Activated CD4-positive, alpha-beta T cell treated with anti-CD3 and anti-CD28 coated beads, Interleukin-2, amount 10 ng/mL, durations not matched to agents 24 days and 14 days (primary cell): ENCODE measurements at regions of chr1 and their contacts with region 1.

Region 1: GRCh38 chr1:154442006-154442740 is 37.0 kb downstream of the IL6R start:
- DNase-seq: no peak
- H3K4me3 Mint-ChIP-seq: no peak overlapping the region
- H3K27ac Mint-ChIP-seq: no peak overlapping the region
- H3K4me1 Mint-ChIP-seq: peaks cover 53% of the 10 kb centered on the region
- H3K27me3 Mint-ChIP-seq: peaks cover 8% of the 10 kb centered on the region

Region 2: GRCh38 chr1:153842006-153842471 is 600.1 kb before region 1 on chr1:
- intact Hi-C with region 1: no loop called
- DNase-seq: no peak
- H3K4me3 Mint-ChIP-seq: no peak overlapping the region
- H3K27ac Mint-ChIP-seq: no peak overlapping the region
- H3K4me1 Mint-ChIP-seq: peaks cover 16% of the 10 kb centered on the region
- H3K27me3 Mint-ChIP-seq: no peaks in the 10 kb centered on the region

Region 3: DNA sequence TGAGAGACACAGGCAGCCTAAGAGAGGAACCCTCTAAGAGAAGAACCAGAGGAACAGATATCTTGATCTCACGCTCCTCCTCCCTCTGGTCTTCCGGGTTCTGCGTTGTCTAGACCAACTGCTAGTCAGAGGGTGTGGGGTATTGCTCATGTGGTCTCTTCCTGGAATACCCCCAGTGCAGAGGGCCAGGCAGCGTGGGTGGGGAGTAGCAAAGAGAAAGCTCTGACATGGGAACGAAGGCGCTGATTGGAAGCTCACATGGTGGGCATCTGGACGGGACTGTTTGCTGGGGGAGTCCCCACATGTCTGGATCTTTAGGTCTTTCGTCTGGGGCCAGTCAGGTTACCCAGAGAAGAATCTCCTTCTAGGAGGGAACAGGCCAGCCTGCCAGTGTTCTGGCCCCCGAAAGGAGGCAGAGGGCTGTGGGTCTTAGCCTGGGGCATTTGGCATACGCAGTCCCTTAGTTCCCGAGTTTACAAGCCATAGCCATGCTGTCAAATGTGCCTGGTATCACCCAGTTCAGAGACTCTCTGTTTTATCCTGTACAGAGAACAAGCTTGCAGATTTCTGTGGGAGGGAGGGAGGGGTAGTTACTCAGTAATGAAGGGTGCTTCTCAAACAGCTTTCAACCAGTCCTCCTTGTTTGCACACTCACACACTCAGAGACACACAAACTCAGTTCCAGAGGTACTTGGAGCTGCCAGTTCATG is 55.4 kb before region 1 on chr1:
- intact Hi-C with region 1: loop called (anchors 1 kb)
- DNase-seq: peak; percentile 86
- H3K4me3 Mint-ChIP-seq: peak overlapping the region; percentile 78
- H3K27ac Mint-ChIP-seq: peak overlapping the region; percentile 94
- H3K4me1 Mint-ChIP-seq: peaks cover 18% of the 10 kb centered on the region
- H3K27me3 Mint-ChIP-seq: no peaks in the 10 kb centered on the region

Region 4: DNA sequence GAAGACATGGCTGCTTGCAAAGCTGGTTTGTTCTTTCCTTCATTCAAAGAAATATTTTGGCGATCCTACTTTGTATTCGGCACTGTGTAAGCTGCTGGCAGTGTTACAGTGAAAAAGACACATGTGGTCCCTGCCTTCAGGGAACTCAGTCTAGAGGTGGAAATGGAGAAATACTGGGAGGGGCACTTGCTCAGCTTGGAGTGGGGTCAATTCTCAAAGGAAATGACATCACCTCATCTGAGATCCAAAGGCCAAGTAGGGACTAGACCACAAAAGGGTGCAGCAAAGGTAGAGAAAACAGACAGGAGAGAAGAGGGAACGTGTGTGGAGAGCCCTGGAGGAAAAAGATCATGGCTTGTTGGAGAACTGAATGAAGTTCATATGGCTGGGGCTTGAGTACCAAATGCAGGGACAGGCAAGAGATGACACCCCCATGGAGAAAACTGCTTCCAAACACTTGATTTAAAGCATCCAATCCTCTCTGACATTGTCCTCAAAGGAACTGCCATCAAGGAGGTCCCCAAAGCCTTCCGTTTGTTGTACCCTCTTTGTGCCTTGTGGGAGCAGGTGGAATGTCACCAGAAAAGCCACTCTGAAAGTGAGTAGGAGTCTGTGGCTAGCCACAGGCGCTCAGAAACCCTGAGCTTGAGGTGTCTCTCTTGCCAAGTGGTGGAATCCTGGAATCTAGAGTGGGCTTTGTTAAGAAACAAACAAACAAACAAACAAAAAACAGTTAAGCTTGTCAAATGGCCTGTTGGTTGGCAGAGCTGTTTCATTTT is 11.6 kb after region 1 on chr1:
- intact Hi-C with region 1: loop called (anchors 2 kb)
- DNase-seq: no peak
- H3K4me3 Mint-ChIP-seq: no peak overlapping the region
- H3K27ac Mint-ChIP-seq: peak overlapping the region; percentile 1
- H3K4me1 Mint-ChIP-seq: peaks cover 21% of the 10 kb centered on the region
- H3K27me3 Mint-ChIP-seq: peaks cover 34% of the 10 kb centered on the region

Region 5: GRCh38 chr1:154463512-154463990 is 21.4 kb after region 1 on chr1:
- intact Hi-C with region 1: loop called (anchors 1 kb)
- DNase-seq: peak; percentile 87
- H3K4me3 Mint-ChIP-seq: peak overlapping the region; percentile 24
- H3K27ac Mint-ChIP-seq: peak overlapping the region; percentile 75
- H3K4me1 Mint-ChIP-seq: peaks cover 42% of the 10 kb centered on the region
- H3K27me3 Mint-ChIP-seq: no peaks in the 10 kb centered on the region

Region 6: DNA sequence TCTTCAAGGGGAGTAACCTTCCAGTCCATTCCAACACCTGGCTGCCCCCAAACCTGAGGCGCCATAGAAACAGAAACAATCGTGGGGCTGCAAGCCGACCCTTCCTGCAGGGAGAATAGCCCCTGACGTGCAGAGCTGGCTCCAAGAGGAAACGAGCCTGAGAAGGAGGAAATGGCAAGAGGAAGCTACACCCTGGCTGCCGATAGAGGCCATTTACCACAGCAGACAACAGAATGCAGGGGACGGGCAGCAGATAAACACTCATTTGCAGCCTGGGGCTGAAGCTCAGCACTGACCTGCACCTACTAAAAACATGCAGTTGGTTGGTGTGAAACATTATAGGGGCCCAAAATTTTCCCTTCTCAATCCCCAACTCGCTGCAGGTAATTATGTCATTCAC is 51.1 kb after region 1 on chr1:
- intact Hi-C with region 1: no loop called
- DNase-seq: peak; percentile 70
- H3K4me3 Mint-ChIP-seq: peak overlapping the region; percentile 43
- H3K27ac Mint-ChIP-seq: no peak overlapping the region
- H3K4me1 Mint-ChIP-seq: peaks cover 20% of the 10 kb centered on the region
- H3K27me3 Mint-ChIP-seq: peaks cover 29% of the 10 kb centered on the region

Region 7: GRCh38 chr1:154503898-154504297 is 61.7 kb after region 1 on chr1:
- intact Hi-C with region 1: no loop called
- DNase-seq: no peak
- H3K4me3 Mint-ChIP-seq: no peak overlapping the region
- H3K27ac Mint-ChIP-seq: no peak overlapping the region
- H3K4me1 Mint-ChIP-seq: peaks cover 4% of the 10 kb centered on the region
- H3K27me3 Mint-ChIP-seq: peaks cover 78% of the 10 kb centered on the region